ENCODE measurements at regions of chr9 and their contacts with region 1.

Region 1: DNA sequence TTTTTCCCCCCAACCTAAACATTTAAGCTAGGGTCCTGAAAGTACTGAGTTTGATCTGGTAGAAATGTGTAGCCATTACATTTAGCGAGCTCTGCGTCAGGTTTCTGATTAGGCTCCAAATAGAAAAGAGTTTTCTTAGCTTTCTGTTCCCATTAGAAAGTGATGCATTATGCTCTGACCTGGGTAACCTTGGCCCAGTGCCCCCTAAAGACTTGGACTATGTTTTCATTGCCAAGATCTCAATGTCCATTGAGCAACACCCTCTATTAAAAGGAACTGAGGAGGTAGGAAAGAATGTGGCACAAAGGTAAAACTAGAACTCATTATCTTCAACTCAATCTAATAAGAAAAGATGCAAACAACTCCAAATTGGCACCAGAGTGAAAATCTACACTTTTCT is 358.9 kb upstream of the PCSK5 start:
- DNase-seq: peak; percentile 65 to 80
- ATAC-seq: peak; percentile 47
- H3K4me3 ChIP-seq: no peak overlapping the region
- H3K27ac ChIP-seq: no peak overlapping the region
- H3K4me1 ChIP-seq: peaks cover 0 to 9% of the 10 kb centered on the region in 2 donors
- H3K27me3 ChIP-seq: no peaks in the 10 kb centered on the region

Region 2: DNA sequence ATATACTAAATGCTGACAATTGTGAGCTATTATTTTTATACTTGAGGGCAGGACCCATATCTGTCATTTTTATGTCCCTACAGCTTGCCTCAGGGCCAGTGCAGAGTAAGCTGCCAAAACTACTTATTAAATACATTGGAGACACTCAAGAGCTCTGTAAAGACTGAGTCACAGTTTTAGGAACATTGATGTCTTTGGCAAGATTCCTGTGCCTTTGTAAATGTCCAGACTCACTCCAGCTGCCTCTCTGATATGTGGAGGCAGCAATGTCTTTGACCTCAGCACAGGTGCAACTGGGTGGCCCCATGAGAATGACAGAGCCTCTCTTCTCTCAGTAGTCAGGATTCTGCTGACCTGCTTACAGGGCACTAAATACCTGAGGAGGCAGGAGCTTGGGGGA is 80.1 kb before region 1 on chr9:
- intact Hi-C with region 1: loop called in 1 of 2 experiments (anchors 5 kb)
- DNase-seq: no peak
- ATAC-seq: peak; percentile 69
- H3K4me3 ChIP-seq: no peak overlapping the region
- H3K27ac ChIP-seq: no peak overlapping the region
- H3K4me1 ChIP-seq: peaks cover 3 to 5% of the 10 kb centered on the region in 2 donors
- H3K27me3 ChIP-seq: no peaks in the 10 kb centered on the region

Region 3: GRCh38 chr9:75467142-75467541 is 64.4 kb before region 1 on chr9:
- intact Hi-C with region 1: no loop called
- DNase-seq: no peak
- ATAC-seq: no peak
- H3K4me3 ChIP-seq: no peak overlapping the region
- H3K27ac ChIP-seq: no peak overlapping the region
- H3K4me1 ChIP-seq: peaks cover 0 to 2% of the 10 kb centered on the region in 2 donors
- H3K27me3 ChIP-seq: no peaks in the 10 kb centered on the region

Measured in aorta (tissue), 5 donors.